Activated CD8-positive, alpha-beta T cell treated with anti-CD3 and anti-CD28 coated beads for 36 hours (primary cell): ENCODE measurements at regions of chr20 and their contacts with region 1.

Region 1: GRCh38 chr20:53869466-53870258 is 200.7 kb downstream of the BCAS1 start:
- DNase-seq: peak; percentile 87
- ATAC-seq: peak; percentile 77
- H3K4me3 Mint-ChIP-seq: peak overlapping the region; percentile 68
- H3K27ac Mint-ChIP-seq: peak overlapping the region; percentile 96
- H3K4me1 Mint-ChIP-seq: peaks cover 74% of the 10 kb centered on the region
- H3K27me3 Mint-ChIP-seq: no peaks in the 10 kb centered on the region
- CTCF ChIP-seq: peak; percentile 89

Region 2: GRCh38 chr20:53578492-53579222 is 291.0 kb before region 1 on chr20:
- CTCF ChIA-PET with region 1: interaction called, 3 read pairs
- POLR2A ChIA-PET with region 1: interaction called, 6 read pairs
- intact Hi-C with region 1: loop called (anchors 5 kb)
- DNase-seq: peak; percentile 69
- ATAC-seq: peak; percentile 41
- H3K4me3 Mint-ChIP-seq: peak overlapping the region; percentile 90
- H3K27ac Mint-ChIP-seq: peak overlapping the region; percentile 94
- H3K4me1 Mint-ChIP-seq: peaks cover 77% of the 10 kb centered on the region
- H3K27me3 Mint-ChIP-seq: no peaks in the 10 kb centered on the region
- CTCF ChIP-seq: peak; percentile 88

Region 3: GRCh38 chr20:53750827-53751619 is 118.6 kb before region 1 on chr20:
- CTCF ChIA-PET with region 1: interaction called, 6 read pairs
- POLR2A ChIA-PET with region 1: interaction called, 3 read pairs
- intact Hi-C with region 1: loop called (anchors 10 kb)
- DNase-seq: peak; percentile 76
- ATAC-seq: peak; percentile 76
- H3K4me3 Mint-ChIP-seq: peak overlapping the region; percentile 59
- H3K27ac Mint-ChIP-seq: peak overlapping the region; percentile 97
- H3K4me1 Mint-ChIP-seq: peaks cover 62% of the 10 kb centered on the region
- H3K27me3 Mint-ChIP-seq: no peaks in the 10 kb centered on the region
- CTCF ChIP-seq: no peak

Region 4: DNA sequence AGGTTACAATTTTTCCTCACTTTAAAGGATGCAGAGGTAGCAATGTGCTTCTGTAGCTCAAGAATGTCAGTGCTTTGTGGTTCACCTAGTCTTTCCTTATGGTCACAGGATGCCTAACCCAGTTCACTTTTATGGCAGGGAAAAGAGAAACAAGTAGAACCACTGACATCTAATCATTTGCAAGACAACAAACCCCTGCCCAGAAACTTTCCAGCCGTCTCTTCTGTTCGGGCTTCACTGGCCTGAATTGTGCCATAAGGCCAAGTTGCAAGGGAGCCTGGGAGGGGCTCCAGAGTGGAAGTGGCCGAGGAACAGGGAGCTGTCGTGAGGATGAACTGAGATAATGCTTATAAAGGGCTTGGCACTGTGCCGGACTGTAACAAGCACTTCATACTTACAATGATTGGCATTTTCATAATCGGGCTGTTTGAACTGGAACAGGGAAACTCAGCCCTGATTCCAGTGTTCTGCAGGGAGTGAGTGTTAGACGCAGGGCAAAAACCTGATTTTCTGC is 11.9 kb before region 1 on chr20:
- CTCF ChIA-PET with region 1: interaction called, 15 read pairs
- POLR2A ChIA-PET with region 1: interaction called, 3 read pairs
- intact Hi-C with region 1: no loop called
- DNase-seq: no peak
- ATAC-seq: no peak
- H3K4me3 Mint-ChIP-seq: no peak overlapping the region
- H3K27ac Mint-ChIP-seq: no peak overlapping the region
- H3K4me1 Mint-ChIP-seq: peaks cover 28% of the 10 kb centered on the region
- H3K27me3 Mint-ChIP-seq: no peaks in the 10 kb centered on the region
- CTCF ChIP-seq: no peak

Region 5: GRCh38 chr20:53939572-53940359 is 70.1 kb after region 1 on chr20:
- CTCF ChIA-PET with region 1: interaction called, 11 read pairs
- POLR2A ChIA-PET with region 1: interaction called, 3 read pairs
- intact Hi-C with region 1: no loop called
- DNase-seq: peak; percentile 92
- ATAC-seq: peak; percentile 84
- H3K4me3 Mint-ChIP-seq: no peak overlapping the region
- H3K27ac Mint-ChIP-seq: peak overlapping the region; percentile 22
- H3K4me1 Mint-ChIP-seq: peaks cover 45% of the 10 kb centered on the region
- H3K27me3 Mint-ChIP-seq: no peaks in the 10 kb centered on the region
- CTCF ChIP-seq: peak; percentile 85